WTC11 (cell line): ENCODE measurements at regions of chr5 and their contacts with region 1.

Region 1: GRCh38 chr5:58886315-58887207 is 303.7 kb downstream of the RAB3C start:
- DNase-seq: peak; percentile 67
- ATAC-seq: peak; percentile 93
- H3K4me3 Mint-ChIP-seq: no peak overlapping the region
- H3K27ac Mint-ChIP-seq: no peak overlapping the region
- H3K4me1 Mint-ChIP-seq: peaks cover 20% of the 10 kb centered on the region
- H3K27me3 Mint-ChIP-seq: peaks cover 2% of the 10 kb centered on the region; the same call in 1 of the 2 replicates
- CTCF ChIP-seq: peak; percentile 77

Region 2: DNA sequence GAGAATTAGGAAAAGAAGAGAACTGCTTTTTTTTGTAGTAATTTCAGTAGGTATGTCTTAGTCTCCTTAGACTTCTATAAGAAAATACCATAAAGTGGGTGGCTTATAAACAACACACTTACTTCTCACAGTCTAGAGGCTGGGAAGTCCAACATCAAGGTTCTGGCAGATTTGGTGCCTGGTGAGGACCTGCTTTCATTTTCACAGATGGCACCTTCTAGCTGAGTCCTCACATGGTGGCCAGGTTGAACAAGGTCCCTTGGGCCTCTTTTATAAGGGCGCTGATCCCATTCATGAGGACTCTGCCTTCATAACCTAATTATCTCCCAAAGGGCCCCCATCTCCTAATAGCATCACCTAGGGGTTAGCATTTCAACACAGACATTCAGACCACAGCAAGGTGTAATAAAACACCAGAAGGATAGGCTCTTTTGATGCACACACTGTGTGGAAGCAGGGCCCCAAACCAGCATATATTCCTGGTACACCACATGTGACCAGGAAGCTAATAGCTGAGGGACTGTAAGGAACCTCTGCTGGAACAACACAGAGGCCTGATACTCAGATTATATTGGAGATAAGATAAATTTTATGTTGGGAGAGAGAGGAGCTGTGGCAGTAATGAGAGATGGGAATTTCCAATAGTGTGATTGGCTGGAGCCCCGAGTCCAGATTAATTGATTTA is 81.2 kb after region 1 on chr5:
- CTCF ChIA-PET with region 1: interaction called, 15 read pairs
- POLR2A ChIA-PET with region 1: no interaction called
- DNase-seq: no peak
- ATAC-seq: no peak
- H3K4me3 Mint-ChIP-seq: no peak overlapping the region
- H3K27ac Mint-ChIP-seq: no peak overlapping the region
- H3K4me1 Mint-ChIP-seq: peaks cover 22% of the 10 kb centered on the region
- H3K27me3 Mint-ChIP-seq: no peaks in the 10 kb centered on the region
- CTCF ChIP-seq: no peak

Region 3: GRCh38 chr5:58983526-58984452 is 97.2 kb after region 1 on chr5:
- CTCF ChIA-PET with region 1: interaction called, 16 read pairs
- POLR2A ChIA-PET with region 1: interaction called, 4 read pairs
- DNase-seq: no peak
- ATAC-seq: no peak
- H3K4me3 Mint-ChIP-seq: no peak overlapping the region
- H3K27ac Mint-ChIP-seq: no peak overlapping the region
- H3K4me1 Mint-ChIP-seq: peaks cover 29% of the 10 kb centered on the region
- H3K27me3 Mint-ChIP-seq: no peaks in the 10 kb centered on the region; the same call in 1 of the 2 replicates
- CTCF ChIP-seq: no peak

Region 4: GRCh38 chr5:58999804-59000595 is 113.4 kb after region 1 on chr5:
- CTCF ChIA-PET with region 1: interaction called, 33 read pairs
- POLR2A ChIA-PET with region 1: no interaction called
- DNase-seq: peak; percentile 78
- ATAC-seq: peak; percentile 92
- H3K4me3 Mint-ChIP-seq: no peak overlapping the region
- H3K27ac Mint-ChIP-seq: peak overlapping the region; percentile 73; the same call in 1 of the 2 replicates
- H3K4me1 Mint-ChIP-seq: peaks cover 62% of the 10 kb centered on the region
- H3K27me3 Mint-ChIP-seq: no peaks in the 10 kb centered on the region
- CTCF ChIP-seq: no peak

Region 5: GRCh38 chr5:59007460-59008063 is 121.0 kb after region 1 on chr5:
- CTCF ChIA-PET with region 1: interaction called, 33 read pairs
- POLR2A ChIA-PET with region 1: no interaction called
- DNase-seq: no peak
- ATAC-seq: no peak
- H3K4me3 Mint-ChIP-seq: no peak overlapping the region
- H3K27ac Mint-ChIP-seq: no peak overlapping the region
- H3K4me1 Mint-ChIP-seq: peaks cover 26% of the 10 kb centered on the region
- H3K27me3 Mint-ChIP-seq: peaks cover 16% of the 10 kb centered on the region
- CTCF ChIP-seq: no peak